ENCODE measurements at regions of chr4 and their contacts with region 1.

Region 1: GRCh38 chr4:8158710-8159536 is at the start of gene ABLIM2:
- DNase-seq: peak; percentile 99
- ATAC-seq: peak; percentile 99
- H3K4me3 Mint-ChIP-seq: peak within 1 kb of the TSS; percentile 95
- H3K27ac Mint-ChIP-seq: peak within 1 kb of the TSS; percentile 78
- H3K4me1 Mint-ChIP-seq: peaks cover 14% of the 10 kb centered on the region
- H3K27me3 Mint-ChIP-seq: peaks cover 7% of the 10 kb centered on the region
- total RNA-seq, gene ABLIM2: 0.58 to 0.64 TPM

Region 2: DNA sequence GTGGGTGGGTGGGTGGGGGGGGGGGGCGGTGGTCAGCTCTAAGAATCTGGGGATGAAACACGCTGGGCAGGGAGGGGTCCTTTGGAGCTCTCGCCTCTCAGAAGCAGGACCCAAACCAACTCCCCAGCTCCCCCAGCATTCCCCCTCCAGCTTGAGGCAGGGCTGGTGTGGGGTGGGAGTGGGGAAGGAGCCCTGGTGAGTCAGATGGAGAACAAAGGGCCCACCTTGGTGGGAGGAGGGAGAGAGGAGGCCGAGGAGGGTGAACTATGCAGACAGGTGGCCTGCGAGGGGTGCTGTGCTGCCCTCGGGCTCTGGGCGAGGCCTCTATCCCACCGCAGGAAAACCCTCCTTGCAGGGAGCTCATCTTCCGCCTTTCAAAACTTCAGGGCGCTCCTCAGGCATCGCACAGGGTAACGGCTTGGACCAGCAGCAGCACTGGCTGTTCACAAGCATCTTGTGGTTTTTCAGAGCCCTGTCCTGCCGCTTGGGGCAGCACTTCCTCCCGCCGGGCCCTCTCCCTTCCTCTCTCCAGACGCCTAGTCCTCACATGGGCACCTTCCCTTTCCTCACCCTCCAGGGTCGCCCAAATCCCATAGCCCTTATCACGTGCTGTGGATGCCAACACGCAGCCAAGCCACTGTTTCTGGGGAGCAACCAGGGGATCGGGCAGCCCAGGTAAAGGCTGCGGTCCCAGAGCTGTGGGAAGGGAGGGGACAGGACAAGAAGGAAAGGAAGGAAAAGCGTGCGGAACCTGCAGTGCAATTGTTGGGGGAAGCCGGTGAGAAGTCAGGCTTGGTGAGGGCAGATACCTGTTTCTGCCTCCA is 1057.0 kb before region 1 on chr4:
- CTCF ChIA-PET with region 1: no interaction called
- POLR2A ChIA-PET with region 1: no interaction called
- intact Hi-C with region 1: loop called in 1 of 2 experiments (anchors 2 kb)
- DNase-seq: peak; percentile 78
- ATAC-seq: peak; percentile 74
- H3K4me3 Mint-ChIP-seq: peak overlapping the region; percentile 84
- H3K27ac Mint-ChIP-seq: no peak overlapping the region
- H3K4me1 Mint-ChIP-seq: peaks cover 8% of the 10 kb centered on the region
- H3K27me3 Mint-ChIP-seq: no peaks in the 10 kb centered on the region

Region 3: DNA sequence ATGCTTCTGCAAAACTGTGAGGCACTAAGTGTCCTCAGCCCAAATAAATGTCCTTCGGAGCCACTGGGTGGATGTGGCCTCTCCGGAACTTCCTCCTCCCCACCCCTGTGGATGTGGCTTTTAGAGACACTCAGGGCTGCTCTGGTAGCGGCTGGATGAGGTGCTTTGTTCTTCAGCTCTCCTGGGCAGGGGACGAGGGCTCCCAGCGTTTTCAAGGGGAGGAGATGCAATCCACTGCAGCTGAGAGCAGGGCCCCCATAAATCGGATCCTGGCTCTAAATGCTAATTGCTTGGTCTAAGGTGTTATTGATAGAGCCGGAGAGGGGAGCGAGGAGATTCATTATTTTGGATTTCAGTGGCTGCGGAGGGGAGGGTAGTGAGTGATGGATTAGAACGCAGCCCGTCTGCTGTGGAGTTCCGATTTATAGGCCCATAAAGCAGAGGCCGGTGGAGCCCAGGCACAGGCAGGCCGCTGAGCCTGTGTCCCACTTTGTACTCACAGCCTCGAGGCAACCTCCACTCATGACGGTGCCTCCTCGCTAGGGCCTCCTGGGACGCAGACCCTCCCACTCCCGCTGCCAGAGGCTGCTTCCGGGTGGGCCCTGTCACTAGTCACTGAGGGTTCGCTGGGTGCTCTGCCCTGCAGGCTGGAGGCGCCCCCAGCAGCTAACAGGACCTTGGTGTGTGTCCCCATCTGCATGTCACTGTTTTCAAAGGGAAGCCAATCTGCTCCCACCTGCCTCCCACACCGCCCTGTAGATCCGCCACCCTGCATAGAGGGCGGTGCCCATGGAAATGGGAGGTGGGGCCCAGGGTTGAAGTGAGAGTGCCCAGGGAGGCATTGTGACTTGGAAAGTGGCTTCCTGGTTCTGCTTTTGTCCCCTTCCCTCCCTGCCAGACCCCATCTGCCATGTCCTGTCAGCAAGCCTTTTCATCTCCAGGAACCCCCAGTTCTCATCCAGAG is 588.8 kb before region 1 on chr4:
- CTCF ChIA-PET with region 1: no interaction called
- POLR2A ChIA-PET with region 1: no interaction called
- intact Hi-C with region 1: no loop called
- DNase-seq: no peak
- ATAC-seq: no peak
- H3K4me3 Mint-ChIP-seq: no peak overlapping the region
- H3K27ac Mint-ChIP-seq: no peak overlapping the region
- H3K4me1 Mint-ChIP-seq: no peaks in the 10 kb centered on the region
- H3K27me3 Mint-ChIP-seq: no peaks in the 10 kb centered on the region

Region 4: DNA sequence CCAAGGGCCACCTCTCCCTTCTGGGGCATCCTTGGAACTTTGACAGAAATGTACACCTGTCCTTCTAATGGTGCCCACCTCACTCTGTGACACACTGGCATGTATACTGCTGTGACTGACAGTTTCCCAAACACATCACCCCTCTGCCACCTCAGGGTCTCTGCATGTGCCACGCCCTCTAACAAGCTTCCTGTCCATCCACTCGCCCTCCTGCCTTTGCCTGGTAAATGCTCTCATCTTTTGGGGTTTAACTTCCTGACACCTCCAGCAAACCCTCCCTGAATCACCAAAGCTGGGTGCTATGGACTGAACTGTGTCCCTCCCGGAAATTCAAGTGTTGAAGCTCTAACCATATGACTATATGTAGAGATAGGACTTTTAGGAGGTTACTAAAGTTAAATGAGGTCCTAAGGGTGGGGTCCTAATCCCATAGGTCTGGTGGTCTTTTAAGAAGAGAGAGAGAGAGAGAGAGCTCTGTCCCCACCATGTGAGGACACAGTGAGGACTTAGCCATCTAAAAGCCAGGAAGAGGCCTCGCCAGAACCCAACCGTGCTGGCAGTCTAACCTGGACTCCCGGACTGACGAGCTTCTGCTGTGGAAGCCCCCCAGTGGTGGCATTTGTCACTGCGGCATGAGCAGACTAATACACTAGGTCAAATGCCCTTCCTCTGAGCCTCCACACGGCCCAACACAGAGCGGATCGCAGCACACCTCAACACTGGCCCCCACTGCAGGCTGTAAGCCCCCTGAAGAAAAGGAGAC is 314.9 kb before region 1 on chr4:
- CTCF ChIA-PET with region 1: no interaction called
- POLR2A ChIA-PET with region 1: no interaction called
- intact Hi-C with region 1: no loop called
- DNase-seq: peak; percentile 83
- ATAC-seq: peak; percentile 87
- H3K4me3 Mint-ChIP-seq: no peak overlapping the region
- H3K27ac Mint-ChIP-seq: peak overlapping the region; percentile 52
- H3K4me1 Mint-ChIP-seq: peaks cover 27% of the 10 kb centered on the region
- H3K27me3 Mint-ChIP-seq: no peaks in the 10 kb centered on the region

Region 5: GRCh38 chr4:7939377-7940108 is 219.4 kb before region 1 on chr4 and contains the start of gene AFAP1:
- CTCF ChIA-PET with region 1: no interaction called
- POLR2A ChIA-PET with region 1: no interaction called
- intact Hi-C with region 1: loop called (anchors 1 to 5 kb)
- DNase-seq: peak; percentile 92
- ATAC-seq: peak; percentile 97
- H3K4me3 Mint-ChIP-seq: peak within 1 kb of the TSS; percentile 80
- H3K27ac Mint-ChIP-seq: no peak within 1 kb of the TSS
- H3K4me1 Mint-ChIP-seq: peaks cover 27% of the 10 kb centered on the region
- H3K27me3 Mint-ChIP-seq: peaks cover 3% of the 10 kb centered on the region
- total RNA-seq, gene AFAP1: 27.1 to 27.2 TPM

Region 6: GRCh38 chr4:8198906-8199593 is 40.1 kb after region 1 on chr4 and contains the start of gene SH3TC1:
- CTCF ChIA-PET with region 1: no interaction called
- POLR2A ChIA-PET with region 1: no interaction called
- intact Hi-C with region 1: loop called (anchors 1 to 2 kb)
- DNase-seq: peak; percentile 83
- ATAC-seq: peak; percentile 80
- H3K4me3 Mint-ChIP-seq: peak within 1 kb of the TSS; percentile 89
- H3K27ac Mint-ChIP-seq: peak within 1 kb of the TSS; percentile 94
- H3K4me1 Mint-ChIP-seq: peaks cover 38% of the 10 kb centered on the region
- H3K27me3 Mint-ChIP-seq: no peaks in the 10 kb centered on the region
- total RNA-seq, gene SH3TC1: 11.1 to 18.3 TPM

Region 7: GRCh38 chr4:8428293-8429097 is 269.6 kb after region 1 on chr4:
- CTCF ChIA-PET with region 1: interaction called, 4 read pairs
- POLR2A ChIA-PET with region 1: no interaction called
- intact Hi-C with region 1: loop called in 1 of 2 experiments (anchors 1 kb)
- DNase-seq: peak; percentile 93
- ATAC-seq: peak; percentile 95
- H3K4me3 Mint-ChIP-seq: peak overlapping the region; percentile 93
- H3K27ac Mint-ChIP-seq: peak overlapping the region; percentile 91
- H3K4me1 Mint-ChIP-seq: peaks cover 27% of the 10 kb centered on the region
- H3K27me3 Mint-ChIP-seq: no peaks in the 10 kb centered on the region